ENCODE measurements at regions of chr11 and their contacts with region 1.

Region 1: GRCh38 chr11:116533186-116533825 is 239.5 kb downstream of the BUD13 start:
- DNase-seq: no peak
- ATAC-seq: no peak
- H3K4me3 ChIP-seq: no peak overlapping the region
- H3K27ac ChIP-seq: no peak overlapping the region
- H3K4me1 ChIP-seq: no peaks in the 10 kb centered on the region
- H3K27me3 ChIP-seq: no peaks in the 10 kb centered on the region

Region 2: DNA sequence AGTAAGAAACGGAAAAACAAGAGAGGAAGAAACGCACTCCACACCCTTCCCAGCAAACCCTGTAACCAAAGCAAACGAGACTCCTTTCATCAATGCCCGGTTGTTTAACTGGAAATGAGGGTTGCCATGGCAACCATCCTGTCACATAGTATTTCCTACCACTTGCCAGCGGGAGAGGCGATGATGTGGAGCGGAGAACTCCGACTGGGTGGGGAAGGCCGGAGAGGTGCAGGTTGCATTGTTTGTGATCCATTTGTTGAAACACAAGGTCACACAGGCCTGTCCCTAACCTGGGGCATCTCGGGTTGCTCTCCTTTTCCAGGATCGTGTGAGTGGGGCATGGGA is 370.4 kb before region 1 on chr11:
- intact Hi-C with region 1: no loop called
- DNase-seq: peak in 1 of 3 donors; percentile 16
- ATAC-seq: peak in 1 of 2 donors; percentile 72
- H3K4me3 ChIP-seq: no peak overlapping the region
- H3K27ac ChIP-seq: no peak overlapping the region
- H3K4me1 ChIP-seq: no peaks in the 10 kb centered on the region
- H3K27me3 ChIP-seq: no peaks in the 10 kb centered on the region

Region 3: DNA sequence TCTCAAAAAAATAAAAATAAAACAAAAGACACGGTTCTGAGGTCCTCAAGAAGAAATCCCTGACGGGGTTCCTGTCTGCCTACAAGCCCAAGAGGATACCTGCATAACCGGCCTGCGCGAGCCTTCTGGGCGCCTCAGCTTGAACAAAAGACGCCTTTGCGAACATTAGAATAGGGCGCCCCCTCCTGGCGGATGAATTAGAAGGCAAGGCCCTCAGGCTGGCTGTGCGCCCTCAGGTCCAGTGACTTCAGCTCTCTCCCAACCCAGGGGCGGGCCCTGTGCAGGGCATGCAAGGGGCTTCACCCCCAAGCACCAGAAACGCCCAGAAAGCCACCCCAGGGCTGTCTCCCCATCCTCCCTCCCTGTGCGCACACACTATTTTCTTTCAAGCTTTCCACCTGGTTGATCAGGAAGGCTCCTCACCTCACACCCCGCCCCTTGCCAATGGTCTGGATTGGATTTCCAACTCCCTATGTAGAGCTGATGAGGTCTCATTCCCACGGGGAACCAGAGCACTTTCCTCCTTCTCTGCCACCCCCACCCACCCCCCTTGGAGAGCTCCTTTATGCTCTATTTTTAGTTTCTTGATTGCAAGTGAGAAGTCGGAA is 33.8 kb before region 1 on chr11:
- intact Hi-C with region 1: loop called in 1 of 4 experiments (anchors 5 kb)
- DNase-seq: peak; percentile 67 to 87 (median 80)
- ATAC-seq: peak; percentile 51 to 53
- H3K4me3 ChIP-seq: no peak overlapping the region
- H3K27ac ChIP-seq: no peak overlapping the region
- H3K4me1 ChIP-seq: no peaks in the 10 kb centered on the region
- H3K27me3 ChIP-seq: no peaks in the 10 kb centered on the region

Measured in right cardiac atrium (tissue), 5 donors.